ENCODE measurements at regions of chr1 and their contacts with region 1.

Region 1: DNA sequence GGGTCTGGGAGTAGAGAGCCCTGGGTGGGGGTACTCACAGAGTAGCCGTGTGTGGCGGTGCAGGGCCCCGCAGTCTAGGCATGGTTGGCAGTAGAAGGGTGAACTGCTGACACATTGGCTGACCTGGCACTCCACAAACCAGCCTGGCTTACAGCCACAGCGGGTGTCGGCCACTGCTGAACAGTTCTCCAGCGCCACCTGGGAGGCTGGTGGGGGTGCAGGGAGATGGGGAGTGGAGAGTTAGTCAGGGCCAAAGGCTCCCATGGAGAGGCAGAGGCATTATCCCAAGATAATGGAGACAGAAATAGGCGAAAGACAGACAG is 1.5 kb downstream of the TNFRSF25 start:
- DNase-seq: no peak
- H3K4me3 ChIP-seq: no peak overlapping the region
- H3K27ac ChIP-seq: no peak overlapping the region
- H3K4me1 ChIP-seq: peaks cover 0 to 20% (median 13%) of the 10 kb centered on the region in 4 experiments; a peak in 5 of 7 replicates
- H3K27me3 ChIP-seq: peaks cover 0 to 7% (median 4%) of the 10 kb centered on the region in 4 experiments; a peak in 3 of 7 replicates
- CTCF ChIP-seq: peak in 1 of 3 experiments; percentile 14; a peak in 1 of 4 replicates
- EP300 ChIP-seq: no peak
- POLR2A ChIP-seq: no peak
- RAD21 ChIP-seq: peak in 1 of 2 experiments; percentile 18; a peak in 1 of 4 replicates

Region 2: GRCh38 chr1:6445062-6445763 is 19.3 kb before region 1 on chr1:
- CTCF ChIA-PET with region 1: interaction called, 22 read pairs
- POLR2A ChIA-PET with region 1: interaction called, 123 read pairs
- DNase-seq: no peak
- H3K4me3 ChIP-seq: no peak overlapping the region
- H3K27ac ChIP-seq: no peak overlapping the region
- H3K4me1 ChIP-seq: peaks cover 3 to 29% (median 18%) of the 10 kb centered on the region in 4 experiments
- H3K27me3 ChIP-seq: peaks cover 0 to 16% (median 11%) of the 10 kb centered on the region in 4 experiments; a peak in 5 of 7 replicates
- CTCF ChIP-seq: peak; percentile 66 to 77 (median 67)
- EP300 ChIP-seq: no peak
- POLR2A ChIP-seq: no peak
- RAD21 ChIP-seq: peak; percentile 34 to 41